Right cardiac atrium (tissue), 5 donors: ENCODE measurements at regions of chr1 and their contacts with region 1.

Region 1: GRCh38 chr1:149962123-149962548 is 25.5 kb upstream of the MTMR11 start:
- DNase-seq: peak in 1 of 3 donors; percentile 50
- ATAC-seq: peak; percentile 78 to 86
- H3K4me3 ChIP-seq: no peak overlapping the region
- H3K27ac ChIP-seq: peak overlapping the region; percentile 84
- H3K4me1 ChIP-seq: no peaks in the 10 kb centered on the region
- H3K27me3 ChIP-seq: no peaks in the 10 kb centered on the region

Region 2: GRCh38 chr1:150010393-150011115 is 48.4 kb after region 1 on chr1 and contains the start of gene OTUD7B:
- intact Hi-C with region 1: no loop called
- DNase-seq: peak; percentile 90 to 96 (median 95)
- ATAC-seq: peak; percentile 95 to 96
- H3K4me3 ChIP-seq: peak within 1 kb of the TSS; percentile 81
- H3K27ac ChIP-seq: peak within 1 kb of the TSS; percentile 95
- H3K4me1 ChIP-seq: no peaks in the 10 kb centered on the region
- H3K27me3 ChIP-seq: no peaks in the 10 kb centered on the region
- total RNA-seq, gene OTUD7B: 23.3 to 27.2 (median 26.5) TPM

Region 3: GRCh38 chr1:150053926-150054325 is 91.8 kb after region 1 on chr1:
- intact Hi-C with region 1: loop called (anchors 2 to 10 kb)
- DNase-seq: no peak
- ATAC-seq: no peak
- H3K4me3 ChIP-seq: no peak overlapping the region
- H3K27ac ChIP-seq: no peak overlapping the region
- H3K4me1 ChIP-seq: peaks cover 2% of the 10 kb centered on the region
- H3K27me3 ChIP-seq: no peaks in the 10 kb centered on the region

Region 4: GRCh38 chr1:150083907-150084306 is 121.8 kb after region 1 on chr1:
- intact Hi-C with region 1: no loop called
- DNase-seq: no peak
- ATAC-seq: no peak
- H3K4me3 ChIP-seq: no peak overlapping the region
- H3K27ac ChIP-seq: no peak overlapping the region
- H3K4me1 ChIP-seq: peaks cover 1% of the 10 kb centered on the region
- H3K27me3 ChIP-seq: no peaks in the 10 kb centered on the region

Region 5: DNA sequence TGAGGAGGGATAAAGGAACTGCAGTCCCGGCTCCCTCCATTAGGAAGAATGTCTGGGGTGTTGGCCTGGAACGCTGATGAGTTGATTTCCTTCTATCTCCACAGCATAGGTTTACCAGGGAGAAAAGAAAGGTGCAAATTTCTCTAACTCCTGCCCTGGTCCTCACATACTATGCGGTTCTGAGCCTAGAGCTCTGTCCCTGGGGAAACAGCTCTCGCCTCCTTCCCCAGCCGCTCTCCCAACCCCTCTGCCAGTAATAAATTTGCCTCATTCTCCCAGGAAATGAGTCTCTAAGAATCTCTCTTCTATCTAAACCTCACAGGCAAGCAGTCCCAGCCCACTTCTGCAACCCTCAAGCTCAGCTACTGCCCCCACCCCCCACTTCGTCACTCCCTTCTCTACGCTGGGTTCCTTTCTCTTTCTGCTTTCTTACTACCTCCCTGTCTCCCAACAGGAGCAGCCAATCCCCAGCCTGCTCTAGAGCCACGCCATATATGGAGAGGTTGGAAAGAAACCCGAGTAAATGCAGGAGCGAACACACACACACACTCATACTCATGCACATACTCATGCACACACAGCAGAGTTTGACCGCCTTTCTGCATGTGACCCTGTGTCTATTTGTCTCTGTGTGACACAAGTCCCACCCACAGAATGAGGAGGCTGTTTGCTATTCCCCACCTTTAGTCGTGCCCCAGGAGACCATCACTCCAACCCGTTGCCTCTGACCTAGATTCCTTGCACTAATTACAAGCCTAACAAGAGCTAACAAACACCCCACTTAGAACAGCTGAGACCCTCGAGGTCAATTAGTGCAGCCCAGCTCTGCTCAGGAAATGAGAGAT is 200.9 kb after region 1 on chr1:
- intact Hi-C with region 1: loop called (anchors 5 to 10 kb)
- DNase-seq: peak; percentile 87 to 93 (median 91)
- ATAC-seq: peak; percentile 95
- H3K4me3 ChIP-seq: peak overlapping the region; percentile 37
- H3K27ac ChIP-seq: peak overlapping the region; percentile 99
- H3K4me1 ChIP-seq: peaks cover 16% of the 10 kb centered on the region
- H3K27me3 ChIP-seq: no peaks in the 10 kb centered on the region

Region 6: DNA sequence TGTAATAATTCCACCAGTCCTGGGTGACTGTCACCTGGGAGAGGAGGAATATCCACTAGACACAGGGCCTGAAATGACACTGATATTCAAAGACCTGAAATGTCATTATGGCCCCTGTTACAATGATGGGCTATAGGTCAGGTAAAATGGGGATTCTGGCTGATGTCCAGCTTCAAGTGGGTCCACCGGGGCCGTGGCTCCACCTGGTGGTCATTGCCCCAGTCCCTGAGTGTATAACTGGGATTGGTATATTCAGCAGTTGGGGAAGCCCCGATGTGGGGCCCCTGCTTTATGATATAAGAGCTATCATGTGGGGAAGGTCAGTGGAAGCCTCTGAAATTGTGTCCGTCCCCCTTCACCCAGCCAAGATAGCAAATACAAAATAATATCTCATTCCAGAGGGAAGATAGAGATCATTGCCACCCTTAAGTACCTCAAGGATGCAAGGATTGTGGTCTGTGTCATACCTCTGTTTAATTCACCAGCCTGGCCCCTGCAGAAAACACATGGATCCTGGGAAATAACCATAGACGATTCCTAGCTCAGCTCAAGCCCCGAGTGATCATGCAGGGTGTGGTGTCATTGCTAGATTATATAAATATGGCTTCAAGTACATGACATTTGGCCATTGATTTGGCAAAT is 206.9 kb after region 1 on chr1:
- intact Hi-C with region 1: loop called (anchors 5 to 10 kb)
- DNase-seq: peak; percentile 66 to 87 (median 84)
- ATAC-seq: peak; percentile 57 to 70
- H3K4me3 ChIP-seq: no peak overlapping the region
- H3K27ac ChIP-seq: no peak overlapping the region
- H3K4me1 ChIP-seq: peaks cover 3% of the 10 kb centered on the region
- H3K27me3 ChIP-seq: no peaks in the 10 kb centered on the region